Esophagus muscularis mucosa (tissue), 4 donors: ENCODE measurements at regions of chr11 and their contacts with region 1.

Region 1: DNA sequence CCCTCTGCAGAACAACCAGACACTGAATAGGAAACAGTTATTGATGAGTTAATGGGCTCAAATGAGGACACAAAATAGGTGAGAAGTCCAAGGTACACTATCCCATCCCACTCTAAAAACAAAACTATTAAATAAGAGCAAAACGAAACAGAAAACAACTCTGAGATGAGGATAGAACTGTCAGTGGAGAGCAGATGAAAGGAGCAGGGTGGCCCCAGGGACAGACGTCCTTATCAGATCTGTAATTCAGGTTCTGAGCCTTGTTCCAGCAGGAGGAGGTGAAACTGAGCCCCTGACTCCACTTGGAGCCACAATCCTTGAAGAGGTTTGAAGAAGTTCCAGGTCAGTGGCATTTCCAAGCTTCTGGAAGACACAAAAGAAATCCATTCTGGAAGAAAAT is 8.5 kb upstream of the SNX19 start:
- DNase-seq: no peak
- H3K4me3 ChIP-seq: no peak overlapping the region
- H3K27ac ChIP-seq: no peak overlapping the region
- H3K4me1 ChIP-seq: no peaks in the 10 kb centered on the region
- H3K27me3 ChIP-seq: no peaks in the 10 kb centered on the region
- CTCF ChIP-seq: no peak
- EP300 ChIP-seq: no peak
- POLR2A ChIP-seq: no peak

Region 2: GRCh38 chr11:131674051-131674755 is 749.4 kb after region 1 on chr11:
- intact Hi-C with region 1: loop called (anchors 2 kb)
- DNase-seq: peak; percentile 94
- H3K4me3 ChIP-seq: no peak overlapping the region
- H3K27ac ChIP-seq: no peak overlapping the region
- H3K4me1 ChIP-seq: peaks cover 0 to 19% (median 14%) of the 10 kb centered on the region in 4 donors
- H3K27me3 ChIP-seq: no peaks in the 10 kb centered on the region
- CTCF ChIP-seq: peak in 2 of 3 experiments; percentile 88 to 93
- EP300 ChIP-seq: no peak
- POLR2A ChIP-seq: no peak